ENCODE measurements at regions of chr5 and their contacts with region 1.

Region 1: GRCh38 chr5:66742083-66742895 is 146.1 kb downstream of the MAST4 start:
- DNase-seq: peak; percentile 48
- ATAC-seq: peak; percentile 39 to 64

Region 2: GRCh38 chr5:66595756-66596635 is 146.3 kb before region 1 on chr5 and contains the start of gene MAST4:
- intact Hi-C with region 1: loop called in 1 of 2 experiments (anchors 5 kb)
- DNase-seq: peak; percentile 91
- ATAC-seq: peak; percentile 94 to 98
- total RNA-seq, gene MAST4: 41.1 to 64.8 TPM

Region 3: DNA sequence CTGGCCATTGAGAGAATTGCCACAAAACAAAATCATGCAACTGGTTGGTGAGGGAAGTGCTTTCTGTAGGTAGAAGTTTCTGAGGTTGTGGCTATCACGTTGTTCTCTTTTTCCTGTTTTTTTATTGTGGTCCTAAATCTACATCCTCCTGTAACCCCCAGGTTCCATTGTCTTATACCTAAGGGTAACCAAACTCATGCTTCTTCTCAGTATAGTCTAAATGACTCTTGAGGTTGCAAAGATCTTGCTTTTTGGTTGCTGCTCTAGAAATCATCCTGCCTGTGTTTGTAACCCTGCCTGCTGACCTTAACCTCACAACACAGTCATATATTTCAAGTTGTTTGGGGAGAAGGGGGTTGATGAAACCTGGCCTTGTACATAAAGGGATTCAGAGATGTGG is 181.2 kb after region 1 on chr5:
- intact Hi-C with region 1: no loop called
- DNase-seq: no peak
- ATAC-seq: no peak

Measured in left cardiac atrium (tissue), 4 donors.